ENCODE measurements at regions of chr17 and their contacts with region 1.

Region 1: DNA sequence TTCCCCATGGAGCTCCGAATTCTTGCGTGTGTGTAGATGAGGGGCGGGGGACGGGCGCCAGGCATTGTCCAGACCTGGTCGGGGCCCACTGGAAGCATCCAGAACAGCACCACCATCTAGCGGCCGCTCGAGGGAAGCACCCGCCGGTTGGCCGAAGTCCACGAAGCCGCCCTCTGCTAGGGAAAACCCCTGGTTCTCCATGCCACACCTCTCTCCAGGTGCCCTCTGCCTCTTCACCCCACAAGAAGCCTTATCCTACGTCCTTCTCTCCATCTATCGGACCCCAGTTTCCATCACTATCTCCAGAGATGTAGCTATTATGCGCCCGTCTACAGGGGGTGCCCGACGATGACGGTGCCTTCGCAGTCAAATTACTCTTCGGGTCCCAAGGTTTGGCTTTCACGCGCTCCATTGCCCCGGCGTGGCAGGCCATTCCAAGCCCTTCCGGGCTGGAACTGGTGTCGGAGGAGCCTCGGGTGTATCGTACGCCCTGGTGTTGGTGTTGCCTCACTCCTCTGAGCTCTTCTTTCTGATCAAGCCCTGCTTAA is 617 bp upstream of the SENP3 start:
- DNase-seq: peak; percentile 62 to 89 (median 77)
- ATAC-seq: peak; percentile 62
- H3K4me3 ChIP-seq: peak overlapping the region; percentile 91
- H3K4me3 Mint-ChIP-seq: peak overlapping the region; percentile 95
- H3K27ac ChIP-seq: peak overlapping the region; percentile 88 to 96
- H3K27ac Mint-ChIP-seq: peak overlapping the region; percentile 93
- H3K4me1 ChIP-seq: peaks cover 66% of the 10 kb centered on the region
- H3K4me1 Mint-ChIP-seq: peaks cover 40% of the 10 kb centered on the region
- H3K27me3 ChIP-seq: no peaks in the 10 kb centered on the region
- H3K27me3 Mint-ChIP-seq: no peaks in the 10 kb centered on the region
- CTCF ChIP-seq: peak; percentile 89

Region 2: GRCh38 chr17:7336240-7337175 is 224.6 kb before region 1 on chr17 and contains the start of gene ACAP1:
- CTCF ChIA-PET with region 1: interaction called, 10 read pairs
- POLR2A ChIA-PET with region 1: interaction called, 3 read pairs
- intact Hi-C with region 1: no loop called
- DNase-seq: peak; percentile 75 to 95 (median 90)
- ATAC-seq: peak; percentile 96
- H3K4me3 ChIP-seq: peak within 1 kb of the TSS; percentile 91
- H3K4me3 Mint-ChIP-seq: peak within 1 kb of the TSS; percentile 89
- H3K27ac ChIP-seq: peak within 1 kb of the TSS; percentile 55 to 64
- H3K27ac Mint-ChIP-seq: peak within 1 kb of the TSS; percentile 91
- H3K4me1 ChIP-seq: peaks cover 88% of the 10 kb centered on the region
- H3K4me1 Mint-ChIP-seq: peaks cover 52% of the 10 kb centered on the region
- H3K27me3 ChIP-seq: no peaks in the 10 kb centered on the region
- H3K27me3 Mint-ChIP-seq: no peaks in the 10 kb centered on the region
- CTCF ChIP-seq: no peak
- total RNA-seq, gene ACAP1: 565 to 575 TPM

Region 3: DNA sequence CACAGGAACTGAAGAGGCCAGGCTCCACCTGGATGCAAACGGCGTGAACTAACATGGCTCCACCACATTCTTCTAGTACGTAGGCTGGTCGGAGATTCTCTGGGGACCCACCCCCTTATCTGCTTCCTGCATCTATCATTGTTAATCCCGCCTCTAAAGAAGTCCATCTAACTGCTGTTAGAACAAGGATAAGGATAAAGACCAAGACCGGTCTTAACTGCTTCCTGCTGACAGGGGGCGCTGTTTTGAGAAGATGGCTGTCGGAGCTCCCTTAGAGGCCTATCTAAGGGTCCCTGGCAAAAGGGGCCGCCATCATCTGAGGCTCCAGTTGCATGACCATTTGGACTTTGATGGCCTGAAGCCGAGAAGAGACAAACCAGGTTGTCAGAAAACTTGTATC is 38.1 kb before region 1 on chr17:
- CTCF ChIA-PET with region 1: interaction called, 14 read pairs
- POLR2A ChIA-PET with region 1: interaction called, 8 read pairs
- intact Hi-C with region 1: loop called in 1 of 2 experiments (anchors 1 kb)
- DNase-seq: peak in 13 of 14 experiments; percentile 21 to 76 (median 43)
- ATAC-seq: peak; percentile 49
- H3K4me3 ChIP-seq: no peak overlapping the region
- H3K4me3 Mint-ChIP-seq: no peak overlapping the region
- H3K27ac ChIP-seq: no peak overlapping the region
- H3K27ac Mint-ChIP-seq: no peak overlapping the region
- H3K4me1 ChIP-seq: no peaks in the 10 kb centered on the region
- H3K4me1 Mint-ChIP-seq: peaks cover 5% of the 10 kb centered on the region
- H3K27me3 ChIP-seq: no peaks in the 10 kb centered on the region
- H3K27me3 Mint-ChIP-seq: no peaks in the 10 kb centered on the region
- CTCF ChIP-seq: peak; percentile 59

Region 4: GRCh38 chr17:7572588-7573323 is 11.7 kb after region 1 on chr17:
- CTCF ChIA-PET with region 1: interaction called, 9 read pairs
- POLR2A ChIA-PET with region 1: interaction called, 51 read pairs
- intact Hi-C with region 1: loop called (anchors 1 kb)
- DNase-seq: peak; percentile 99 to 100 (median 100)
- ATAC-seq: peak; percentile 83
- H3K4me3 ChIP-seq: peak overlapping the region; percentile 100
- H3K4me3 Mint-ChIP-seq: peak overlapping the region; percentile 99
- H3K27ac ChIP-seq: peak overlapping the region; percentile 96 to 98
- H3K27ac Mint-ChIP-seq: peak overlapping the region; percentile 99
- H3K4me1 ChIP-seq: peaks cover 50% of the 10 kb centered on the region
- H3K4me1 Mint-ChIP-seq: peaks cover 52% of the 10 kb centered on the region
- H3K27me3 ChIP-seq: no peaks in the 10 kb centered on the region
- H3K27me3 Mint-ChIP-seq: peaks cover 3% of the 10 kb centered on the region
- CTCF ChIP-seq: no peak

Region 5: DNA sequence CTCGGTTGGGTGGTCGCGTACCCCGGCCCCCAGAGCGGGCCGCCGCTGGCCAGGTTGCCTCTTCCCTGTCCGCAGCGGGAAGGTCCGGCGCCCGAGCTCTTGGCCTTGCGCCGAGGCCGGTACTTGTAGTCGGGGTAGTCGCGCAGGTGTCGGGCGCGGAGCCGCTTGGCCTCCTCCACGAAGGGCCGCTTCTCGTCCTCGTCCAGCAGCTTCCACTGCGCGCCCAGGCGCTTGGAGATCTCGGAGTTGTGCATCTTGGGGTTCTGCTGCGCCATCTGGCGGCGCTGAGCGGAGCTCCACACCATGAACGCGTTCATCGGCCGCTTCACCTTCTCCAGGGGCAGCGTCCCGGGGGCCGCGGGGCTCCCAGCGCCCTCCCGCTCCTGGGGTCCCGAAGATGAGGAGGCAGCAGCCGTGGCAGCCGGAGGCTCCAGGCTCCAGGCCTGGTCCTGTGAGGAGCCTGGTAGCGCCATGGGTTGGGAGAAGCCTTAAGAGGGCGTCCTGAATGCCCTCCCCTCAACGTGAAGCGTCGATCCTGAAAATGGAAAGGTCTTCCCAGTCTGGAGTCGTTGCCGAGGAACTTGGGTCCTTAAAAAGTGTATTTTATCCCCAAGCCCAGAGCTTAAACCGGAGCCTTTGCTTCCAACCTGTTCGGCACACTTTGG is 28.2 kb after region 1 on chr17:
- CTCF ChIA-PET with region 1: interaction called, 15 read pairs
- POLR2A ChIA-PET with region 1: interaction called, 28 read pairs
- intact Hi-C with region 1: no loop called
- DNase-seq: peak; percentile 47 to 87 (median 62)
- ATAC-seq: peak; percentile 90
- H3K4me3 ChIP-seq: no peak overlapping the region
- H3K4me3 Mint-ChIP-seq: no peak overlapping the region
- H3K27ac ChIP-seq: no peak overlapping the region
- H3K27ac Mint-ChIP-seq: no peak overlapping the region
- H3K4me1 ChIP-seq: peaks cover 31% of the 10 kb centered on the region
- H3K4me1 Mint-ChIP-seq: peaks cover 7% of the 10 kb centered on the region
- H3K27me3 ChIP-seq: no peaks in the 10 kb centered on the region
- H3K27me3 Mint-ChIP-seq: no peaks in the 10 kb centered on the region
- CTCF ChIP-seq: peak; percentile 76

Region 6: GRCh38 chr17:7755095-7755890 is 194.2 kb after region 1 on chr17:
- CTCF ChIA-PET with region 1: no interaction called
- POLR2A ChIA-PET with region 1: no interaction called
- intact Hi-C with region 1: no loop called
- DNase-seq: no peak
- ATAC-seq: no peak
- H3K4me3 ChIP-seq: no peak overlapping the region
- H3K4me3 Mint-ChIP-seq: no peak overlapping the region
- H3K27ac ChIP-seq: no peak overlapping the region
- H3K27ac Mint-ChIP-seq: no peak overlapping the region
- H3K4me1 ChIP-seq: no peaks in the 10 kb centered on the region
- H3K4me1 Mint-ChIP-seq: no peaks in the 10 kb centered on the region
- H3K27me3 ChIP-seq: no peaks in the 10 kb centered on the region
- H3K27me3 Mint-ChIP-seq: peaks cover 13% of the 10 kb centered on the region
- CTCF ChIP-seq: no peak

Region 7: GRCh38 chr17:8105957-8106398 is 544.9 kb after region 1 on chr17:
- CTCF ChIA-PET with region 1: no interaction called
- POLR2A ChIA-PET with region 1: no interaction called
- intact Hi-C with region 1: no loop called
- DNase-seq: no peak
- ATAC-seq: no peak
- H3K4me3 ChIP-seq: no peak overlapping the region
- H3K4me3 Mint-ChIP-seq: no peak overlapping the region
- H3K27ac ChIP-seq: no peak overlapping the region
- H3K27ac Mint-ChIP-seq: no peak overlapping the region
- H3K4me1 ChIP-seq: peaks cover 13% of the 10 kb centered on the region
- H3K4me1 Mint-ChIP-seq: peaks cover 4% of the 10 kb centered on the region
- H3K27me3 ChIP-seq: no peaks in the 10 kb centered on the region
- H3K27me3 Mint-ChIP-seq: no peaks in the 10 kb centered on the region
- CTCF ChIP-seq: no peak

Measured in CD4-positive, alpha-beta T cell (primary cell).